Vagina (tissue), 2 donors: ENCODE measurements at regions of chr2 and their contacts with region 1.

Region 1: DNA sequence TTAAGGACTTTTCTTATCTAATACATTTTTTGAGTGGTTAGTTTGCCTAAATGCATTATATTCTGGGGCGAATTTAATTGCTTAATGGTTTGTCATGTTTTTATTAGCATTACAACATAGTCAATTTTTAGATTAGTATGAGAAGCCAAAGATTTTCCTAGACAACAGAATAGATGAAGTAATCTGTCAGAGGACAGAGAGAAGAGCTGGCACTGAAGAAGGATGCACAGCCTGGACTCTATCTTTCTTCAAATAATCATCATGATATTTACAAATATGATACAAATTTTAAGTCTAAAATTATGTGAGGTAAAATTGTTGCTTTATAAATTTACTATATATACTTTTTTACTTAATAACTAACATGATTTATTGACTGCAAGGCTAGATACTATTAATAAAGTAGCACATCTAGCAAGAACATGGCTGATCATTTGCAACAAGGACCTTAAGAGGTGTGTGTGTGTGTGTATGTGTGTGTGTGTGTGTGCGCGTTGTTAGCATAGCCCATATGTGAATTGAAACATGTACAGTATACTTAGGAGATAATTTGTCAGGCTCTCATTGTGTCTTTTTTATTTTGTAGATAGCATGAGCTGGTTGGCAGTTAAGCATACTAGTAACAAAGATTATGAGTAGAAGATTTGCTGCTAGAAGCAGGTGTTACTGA is 752.2 kb downstream of the DCDC2C start:
- DNase-seq: no peak
- H3K4me3 ChIP-seq: no peak overlapping the region
- H3K27ac ChIP-seq: no peak overlapping the region
- H3K4me1 ChIP-seq: no peaks in the 10 kb centered on the region
- H3K27me3 ChIP-seq: no peaks in the 10 kb centered on the region
- CTCF ChIP-seq: no peak
- POLR2A ChIP-seq: no peak

Region 2: GRCh38 chr2:4628998-4629501 is 173.4 kb after region 1 on chr2:
- intact Hi-C with region 1: no loop called
- DNase-seq: no peak
- H3K4me3 ChIP-seq: no peak overlapping the region
- H3K27ac ChIP-seq: no peak overlapping the region
- H3K4me1 ChIP-seq: no peaks in the 10 kb centered on the region
- H3K27me3 ChIP-seq: no peaks in the 10 kb centered on the region
- CTCF ChIP-seq: no peak
- POLR2A ChIP-seq: no peak

Region 3: GRCh38 chr2:5083402-5083801 is 627.8 kb after region 1 on chr2:
- intact Hi-C with region 1: loop called (anchors 5 kb)
- DNase-seq: no peak
- H3K4me3 ChIP-seq: no peak overlapping the region
- H3K27ac ChIP-seq: no peak overlapping the region
- H3K4me1 ChIP-seq: no peaks in the 10 kb centered on the region
- H3K27me3 ChIP-seq: no peaks in the 10 kb centered on the region
- CTCF ChIP-seq: no peak
- POLR2A ChIP-seq: no peak